Dendritic cell treated with granulocyte-macrophage colony-stimulating factor and Interleukin-4, amounts not matched to agents 40 ng/mL and 50 ng/mL, for 4 days (primary cell): ENCODE measurements at regions of chrX and their contacts with region 1.

Region 1: GRCh38 chrX:132219343-132219768 is at the start of gene RAP2C:
- H3K4me3 Mint-ChIP-seq: peak within 1 kb of the TSS; percentile 79
- H3K27ac Mint-ChIP-seq: peak within 1 kb of the TSS; percentile 90
- H3K4me1 Mint-ChIP-seq: peaks cover 13% of the 10 kb centered on the region
- H3K27me3 Mint-ChIP-seq: no peaks in the 10 kb centered on the region

Region 2: GRCh38 chrX:131812836-131813825 is 406.2 kb before region 1 on chrX:
- intact Hi-C with region 1: loop called (anchors 2 kb)
- H3K4me3 Mint-ChIP-seq: peak overlapping the region; percentile 70
- H3K27ac Mint-ChIP-seq: peak overlapping the region; percentile 96
- H3K4me1 Mint-ChIP-seq: peaks cover 9% of the 10 kb centered on the region
- H3K27me3 Mint-ChIP-seq: no peaks in the 10 kb centered on the region

Region 3: GRCh38 chrX:131830400-131831184 is 388.8 kb before region 1 on chrX:
- intact Hi-C with region 1: loop called (anchors 5 kb)
- H3K4me3 Mint-ChIP-seq: peak overlapping the region; percentile 77
- H3K27ac Mint-ChIP-seq: peak overlapping the region; percentile 87
- H3K4me1 Mint-ChIP-seq: peaks cover 12% of the 10 kb centered on the region
- H3K27me3 Mint-ChIP-seq: no peaks in the 10 kb centered on the region

Region 4: DNA sequence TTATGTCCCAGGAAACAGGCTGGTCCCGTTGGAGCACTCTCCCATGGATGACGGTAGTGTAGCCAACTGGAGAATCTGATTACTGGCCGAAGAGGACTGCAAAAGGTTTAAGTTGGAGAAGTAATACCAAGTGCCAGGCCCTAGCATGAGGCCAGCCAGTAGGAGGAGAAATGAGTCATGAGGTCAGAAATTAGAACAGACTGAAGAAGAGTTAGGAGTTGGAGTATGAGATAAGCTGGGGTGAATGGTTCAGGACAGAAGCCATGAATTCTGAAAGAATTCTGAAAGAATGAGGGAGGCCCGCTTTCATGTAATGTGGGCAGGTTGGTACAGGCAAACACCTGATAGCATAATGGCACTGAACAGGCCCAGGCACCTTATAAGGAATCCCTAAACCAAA is 214.6 kb before region 1 on chrX:
- intact Hi-C with region 1: no loop called
- H3K4me3 Mint-ChIP-seq: no peak overlapping the region
- H3K27ac Mint-ChIP-seq: no peak overlapping the region
- H3K4me1 Mint-ChIP-seq: peaks cover 20% of the 10 kb centered on the region
- H3K27me3 Mint-ChIP-seq: no peaks in the 10 kb centered on the region

Region 5: GRCh38 chrX:132022967-132023895 is 196.1 kb before region 1 on chrX and contains the start of gene STK26:
- intact Hi-C with region 1: loop called (anchors 5 kb)
- H3K4me3 Mint-ChIP-seq: peak within 1 kb of the TSS; percentile 84
- H3K27ac Mint-ChIP-seq: peak within 1 kb of the TSS; percentile 89
- H3K4me1 Mint-ChIP-seq: peaks cover 17% of the 10 kb centered on the region
- H3K27me3 Mint-ChIP-seq: no peaks in the 10 kb centered on the region

Region 6: GRCh38 chrX:132092439-132093065 is 126.8 kb before region 1 on chrX:
- intact Hi-C with region 1: loop called (anchors 2 kb)
- H3K4me3 Mint-ChIP-seq: no peak overlapping the region
- H3K27ac Mint-ChIP-seq: no peak overlapping the region
- H3K4me1 Mint-ChIP-seq: peaks cover 11% of the 10 kb centered on the region
- H3K27me3 Mint-ChIP-seq: no peaks in the 10 kb centered on the region

Region 7: DNA sequence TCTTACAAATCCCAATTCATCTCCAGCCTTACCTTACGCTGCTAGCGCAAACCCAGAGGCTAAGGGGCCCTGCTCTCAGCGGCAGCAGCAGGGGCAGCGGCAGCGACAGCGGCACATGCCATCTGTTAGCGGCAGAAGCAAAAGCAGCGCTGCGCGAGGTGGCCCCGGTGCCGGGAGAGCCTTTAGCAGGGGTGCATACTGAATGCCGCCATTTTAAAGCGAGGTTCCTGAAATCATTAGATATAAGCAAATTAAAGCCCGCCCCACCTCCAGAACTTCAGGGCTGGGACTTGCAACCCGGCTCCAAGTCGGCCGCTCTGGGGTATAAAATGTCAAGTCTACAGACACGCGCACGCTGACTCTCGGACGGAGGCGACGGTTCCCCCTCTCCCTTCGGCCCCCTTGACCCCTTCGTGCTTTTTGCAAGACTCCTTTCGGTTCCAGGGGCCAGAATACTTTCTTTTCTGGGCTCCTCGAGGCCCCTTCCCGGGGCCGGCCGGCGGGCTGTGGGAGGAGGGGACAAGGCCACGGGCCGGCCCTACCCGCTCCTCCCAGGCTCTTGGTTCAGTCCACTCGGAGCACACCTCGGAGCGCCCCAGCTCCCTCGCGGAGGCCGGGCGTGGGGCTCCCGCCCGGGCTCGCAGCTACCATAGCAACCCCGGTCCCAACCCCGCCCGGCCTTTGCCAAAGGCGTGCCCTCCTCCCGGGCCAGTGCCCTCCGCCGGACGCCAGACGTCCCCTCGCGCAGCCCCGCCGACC is 269.6 kb after region 1 on chrX and contains the start of gene MBNL3:
- intact Hi-C with region 1: loop called (anchors 5 kb)
- H3K4me3 Mint-ChIP-seq: peak within 1 kb of the TSS; percentile 96
- H3K27ac Mint-ChIP-seq: peak within 1 kb of the TSS; percentile 99
- H3K4me1 Mint-ChIP-seq: peaks cover 11% of the 10 kb centered on the region
- H3K27me3 Mint-ChIP-seq: no peaks in the 10 kb centered on the region

Region 8: GRCh38 chrX:132664269-132664668 is 444.9 kb after region 1 on chrX:
- intact Hi-C with region 1: no loop called
- H3K4me3 Mint-ChIP-seq: no peak overlapping the region
- H3K27ac Mint-ChIP-seq: no peak overlapping the region
- H3K4me1 Mint-ChIP-seq: no peaks in the 10 kb centered on the region
- H3K27me3 Mint-ChIP-seq: peaks cover 5% of the 10 kb centered on the region